ENCODE measurements at regions of chr6 and their contacts with region 1.

Region 1: DNA sequence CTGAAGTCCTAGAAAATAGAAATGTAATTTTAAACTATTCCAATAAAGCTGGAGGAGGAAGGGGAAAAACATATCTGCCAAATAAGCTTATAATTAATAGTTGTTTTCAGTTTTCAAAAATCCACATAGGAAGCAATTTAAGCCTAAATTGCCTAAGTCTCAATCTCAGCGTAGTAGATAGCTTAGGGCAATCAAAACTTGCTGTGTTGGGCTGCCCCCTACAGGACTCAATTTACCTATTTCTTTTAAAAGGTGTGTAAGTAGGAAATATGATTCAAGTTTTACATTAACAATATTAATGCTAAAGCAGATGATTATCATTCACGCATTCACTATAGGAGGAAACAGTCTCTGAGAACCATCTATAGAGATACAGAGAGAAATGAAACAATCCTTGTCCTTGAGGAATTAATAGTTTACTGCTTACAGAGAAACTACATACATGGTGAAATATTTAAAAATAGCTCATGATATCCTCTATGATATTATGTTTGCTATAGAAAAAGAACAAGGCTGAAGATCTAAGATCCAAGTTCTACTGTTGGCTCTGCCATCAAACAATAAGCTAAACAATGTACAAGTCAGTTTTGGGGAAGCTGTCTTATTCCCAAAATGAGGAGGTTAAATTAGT is 102.1 kb downstream of the ATG5 start:
- DNase-seq: peak; percentile 54
- H3K4me3 ChIP-seq: no peak overlapping the region
- H3K27ac ChIP-seq: no peak overlapping the region
- H3K27me3 ChIP-seq: no peaks in the 10 kb centered on the region
- CTCF ChIP-seq: peak; percentile 69

Region 2: GRCh38 chr6:105431226-105431625 is 792.2 kb before region 1 on chr6:
- CTCF ChIA-PET with region 1: interaction called, 57 read pairs
- POLR2A ChIA-PET with region 1: no interaction called
- DNase-seq: peak; percentile 15
- H3K4me3 ChIP-seq: no peak overlapping the region
- H3K27ac ChIP-seq: no peak overlapping the region
- H3K27me3 ChIP-seq: no peaks in the 10 kb centered on the region
- CTCF ChIP-seq: peak; percentile 58

Region 3: DNA sequence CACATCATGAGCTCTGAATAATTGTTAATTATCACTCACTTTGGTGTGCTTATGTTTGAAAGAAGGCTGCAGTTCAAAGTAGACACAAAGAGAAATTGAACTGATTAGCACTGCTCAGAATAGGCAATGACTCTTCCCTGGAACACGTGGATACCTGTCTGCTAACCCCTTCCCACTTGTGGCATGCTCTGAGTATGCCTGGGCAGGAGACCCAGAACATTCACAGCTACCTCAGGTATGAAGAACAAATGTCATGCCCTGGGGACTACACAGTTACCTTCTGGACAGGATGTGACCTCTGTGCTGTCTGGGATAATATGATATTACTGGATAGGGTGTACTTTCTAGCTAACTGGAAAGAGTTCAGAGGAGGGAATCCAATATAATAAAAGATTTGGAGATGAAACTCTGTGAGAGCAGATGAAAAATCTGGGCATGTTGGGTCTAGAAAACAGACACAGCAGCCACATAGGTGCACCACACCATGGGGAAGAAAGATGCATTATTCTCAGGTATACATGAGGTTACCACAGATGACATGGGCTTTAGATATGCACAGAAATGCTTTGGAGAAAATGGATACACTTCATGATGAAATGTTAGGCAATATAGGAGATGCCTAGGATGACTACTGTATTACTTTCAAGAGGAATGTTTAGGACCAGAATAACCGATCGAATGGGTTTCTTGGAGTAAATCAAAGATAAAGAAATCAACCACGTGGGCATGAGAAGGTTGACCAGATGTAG is 496.3 kb before region 1 on chr6:
- CTCF ChIA-PET with region 1: interaction called, 11 read pairs
- POLR2A ChIA-PET with region 1: no interaction called
- DNase-seq: peak; percentile 15
- H3K4me3 ChIP-seq: no peak overlapping the region
- H3K27ac ChIP-seq: no peak overlapping the region
- H3K27me3 ChIP-seq: no peaks in the 10 kb centered on the region
- CTCF ChIP-seq: no peak

Region 4: GRCh38 chr6:106085984-106086813 is 137.2 kb before region 1 on chr6 and contains the start of gene PRDM1:
- CTCF ChIA-PET with region 1: interaction called, 73 read pairs
- POLR2A ChIA-PET with region 1: no interaction called
- DNase-seq: no peak
- H3K4me3 ChIP-seq: peak within 1 kb of the TSS; percentile 74
- H3K27ac ChIP-seq: peak within 1 kb of the TSS; percentile 77
- H3K27me3 ChIP-seq: no peaks in the 10 kb centered on the region
- CTCF ChIP-seq: peak; percentile 17; the same call in 1 of the 2 replicates
- polyA plus RNA-seq, gene PRDM1: 3.4 and 3.7 TPM in 2 replicates

Region 5: GRCh38 chr6:106181664-106182418 is 41.6 kb before region 1 on chr6:
- CTCF ChIA-PET with region 1: interaction called, 14 read pairs
- POLR2A ChIA-PET with region 1: no interaction called
- DNase-seq: no peak
- H3K4me3 ChIP-seq: no peak overlapping the region
- H3K27ac ChIP-seq: no peak overlapping the region
- H3K27me3 ChIP-seq: no peaks in the 10 kb centered on the region
- CTCF ChIP-seq: no peak

Region 6: DNA sequence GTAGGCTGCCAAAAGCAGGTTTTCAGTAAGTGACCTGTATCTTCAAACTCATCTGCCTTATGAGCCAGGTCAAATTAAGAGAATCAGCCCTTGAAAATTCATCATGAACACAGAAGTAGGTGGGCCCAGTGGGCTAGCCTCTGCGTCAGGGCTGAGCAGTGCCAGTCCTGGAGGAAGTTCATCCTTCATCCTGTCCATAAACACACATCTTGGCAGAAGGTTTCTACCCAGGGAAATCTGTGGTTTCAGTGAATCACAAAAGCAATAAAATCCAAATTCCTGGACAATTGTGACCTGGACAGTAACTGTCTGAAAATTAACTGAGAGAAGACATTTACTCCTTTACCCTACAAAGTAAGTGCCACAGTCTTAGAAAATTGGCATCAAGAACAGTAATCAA is 29.8 kb after region 1 on chr6:
- CTCF ChIA-PET with region 1: interaction called, 21 read pairs
- POLR2A ChIA-PET with region 1: no interaction called
- DNase-seq: no peak
- H3K4me3 ChIP-seq: no peak overlapping the region
- H3K27ac ChIP-seq: no peak overlapping the region
- H3K27me3 ChIP-seq: no peaks in the 10 kb centered on the region
- CTCF ChIP-seq: no peak